ENCODE measurements at regions of chrX and their contacts with region 1.

Region 1: DNA sequence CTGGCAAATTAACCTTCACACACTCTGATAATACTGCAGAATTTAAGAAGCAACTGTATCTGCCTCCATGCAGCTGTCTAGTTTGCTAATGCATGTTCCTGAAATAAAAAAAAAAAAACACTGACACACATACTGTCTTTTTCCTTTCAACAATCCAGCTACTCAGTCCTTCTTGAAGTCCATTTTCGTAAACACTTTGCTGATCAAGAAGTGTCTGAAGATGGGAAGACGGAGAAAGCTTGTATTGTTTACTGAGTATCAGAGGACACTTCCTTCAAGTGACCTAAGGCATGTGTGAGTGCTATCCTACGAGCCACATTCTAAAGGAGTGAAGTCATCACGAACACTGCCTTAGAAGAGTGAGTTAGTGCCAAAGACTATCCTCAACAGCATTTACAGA is 82.6 kb downstream of the LUZP4 start:
- DNase-seq: no peak
- H3K4me3 ChIP-seq: no peak overlapping the region
- H3K27ac ChIP-seq: no peak overlapping the region
- H3K4me1 ChIP-seq: peaks cover 1% of the 10 kb centered on the region
- H3K27me3 ChIP-seq: no peaks in the 10 kb centered on the region
- CTCF ChIP-seq: no peak
- EP300 ChIP-seq: no peak
- POLR2A ChIP-seq: no peak

Region 2: DNA sequence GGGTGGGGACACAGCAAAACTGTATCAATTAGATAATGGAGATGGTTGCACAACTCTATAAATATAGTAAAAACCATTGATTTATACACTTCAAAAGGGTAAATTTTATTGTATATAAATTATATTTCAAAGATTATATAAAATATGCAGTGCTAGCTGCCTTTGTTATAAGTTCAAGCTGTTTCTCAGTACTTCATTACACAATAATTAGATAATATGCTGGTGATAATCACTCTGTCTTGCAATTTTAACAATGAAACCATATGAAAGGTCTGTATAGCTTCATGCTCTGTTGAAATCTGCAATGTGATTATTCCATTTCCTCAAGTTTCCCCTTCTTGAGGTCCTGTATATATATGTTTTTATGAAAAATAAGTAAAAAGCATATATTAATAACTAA is 115.5 kb after region 1 on chrX:
- intact Hi-C with region 1: loop called in 1 of 4 experiments (anchors 10 kb)
- DNase-seq: no peak
- H3K4me3 ChIP-seq: no peak overlapping the region
- H3K27ac ChIP-seq: no peak overlapping the region
- H3K4me1 ChIP-seq: no peaks in the 10 kb centered on the region
- H3K27me3 ChIP-seq: no peaks in the 10 kb centered on the region
- CTCF ChIP-seq: no peak
- EP300 ChIP-seq: no peak
- POLR2A ChIP-seq: no peak